Activated CD4-positive, alpha-beta T cell treated with anti-CD3 and anti-CD28 coated beads, Interleukin-2, amount 10 ng/mL, durations not matched to agents 24 days and 14 days (primary cell): ENCODE measurements at regions of chr5 and their contacts with region 1.

Region 1: GRCh38 chr5:80960531-80961375 is 590 bp downstream of the RASGRF2 start:
- DNase-seq: peak; percentile 84
- H3K4me3 Mint-ChIP-seq: peak overlapping the region; percentile 89
- H3K27ac Mint-ChIP-seq: peak overlapping the region; percentile 82
- H3K4me1 Mint-ChIP-seq: peaks cover 48% of the 10 kb centered on the region
- H3K27me3 Mint-ChIP-seq: peaks cover 5% of the 10 kb centered on the region

Region 2: GRCh38 chr5:80346055-80346454 is 614.7 kb before region 1 on chr5:
- intact Hi-C with region 1: no loop called
- DNase-seq: peak; percentile 76
- H3K4me3 Mint-ChIP-seq: no peak overlapping the region
- H3K27ac Mint-ChIP-seq: no peak overlapping the region
- H3K4me1 Mint-ChIP-seq: no peaks in the 10 kb centered on the region
- H3K27me3 Mint-ChIP-seq: peaks cover 4% of the 10 kb centered on the region

Region 3: DNA sequence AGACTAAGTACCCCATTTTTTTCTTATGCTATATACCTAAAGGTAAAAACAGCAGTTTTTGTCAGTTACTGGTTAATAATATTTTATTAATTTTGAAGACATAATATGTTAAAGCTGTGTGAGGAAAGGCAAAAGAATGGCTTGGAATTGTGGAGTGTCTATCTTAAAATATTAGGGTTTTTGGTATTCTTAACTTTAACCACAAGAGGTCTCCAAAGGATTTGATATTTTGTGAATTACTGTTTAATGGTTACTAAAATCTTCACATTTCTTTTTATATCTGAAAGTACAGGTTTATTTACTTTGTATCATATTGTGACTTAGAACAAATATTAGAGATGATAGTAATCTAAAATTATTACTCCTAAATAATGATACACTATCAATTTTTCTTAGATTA is 274.0 kb before region 1 on chr5:
- intact Hi-C with region 1: loop called (anchors 10 kb)
- DNase-seq: no peak
- H3K4me3 Mint-ChIP-seq: no peak overlapping the region
- H3K27ac Mint-ChIP-seq: no peak overlapping the region
- H3K4me1 Mint-ChIP-seq: peaks cover 20% of the 10 kb centered on the region
- H3K27me3 Mint-ChIP-seq: no peaks in the 10 kb centered on the region

Region 4: DNA sequence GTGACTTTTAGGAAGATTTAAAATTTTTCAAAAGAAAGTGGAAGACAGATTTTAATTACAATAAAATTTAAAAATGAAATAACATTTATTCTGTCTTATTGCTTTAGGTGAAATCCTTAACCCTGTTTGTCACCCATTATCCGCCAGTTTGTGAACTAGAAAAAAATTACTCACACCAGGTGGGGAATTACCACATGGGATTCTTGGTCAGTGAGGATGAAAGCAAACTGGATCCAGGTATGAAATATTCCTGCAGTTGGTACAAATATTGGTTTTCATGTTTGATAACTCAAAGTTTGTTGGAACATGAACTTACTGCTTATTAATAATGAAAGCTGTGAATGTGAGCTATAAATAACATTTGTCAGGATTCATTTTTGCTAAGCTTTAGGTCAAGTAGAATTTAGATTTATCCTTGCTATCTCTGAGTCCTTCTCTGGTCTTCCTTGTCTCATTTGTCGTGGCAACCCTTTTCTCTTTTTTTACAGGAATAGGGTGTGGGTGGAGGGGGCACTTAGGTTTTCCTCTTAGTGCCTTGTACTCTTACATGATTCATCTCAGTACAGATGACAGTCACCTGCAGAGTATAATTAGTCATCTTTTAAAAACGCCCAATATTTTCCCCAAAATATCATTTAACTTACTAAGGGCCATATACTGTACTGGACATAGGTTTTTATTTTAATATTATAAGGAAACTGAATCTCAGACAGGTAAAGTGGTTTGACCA is 95.9 kb before region 1 on chr5:
- intact Hi-C with region 1: loop called (anchors 2 kb)
- DNase-seq: no peak
- H3K4me3 Mint-ChIP-seq: peak overlapping the region; percentile 26
- H3K27ac Mint-ChIP-seq: peak overlapping the region; percentile 74
- H3K4me1 Mint-ChIP-seq: peaks cover 53% of the 10 kb centered on the region
- H3K27me3 Mint-ChIP-seq: no peaks in the 10 kb centered on the region

Region 5: DNA sequence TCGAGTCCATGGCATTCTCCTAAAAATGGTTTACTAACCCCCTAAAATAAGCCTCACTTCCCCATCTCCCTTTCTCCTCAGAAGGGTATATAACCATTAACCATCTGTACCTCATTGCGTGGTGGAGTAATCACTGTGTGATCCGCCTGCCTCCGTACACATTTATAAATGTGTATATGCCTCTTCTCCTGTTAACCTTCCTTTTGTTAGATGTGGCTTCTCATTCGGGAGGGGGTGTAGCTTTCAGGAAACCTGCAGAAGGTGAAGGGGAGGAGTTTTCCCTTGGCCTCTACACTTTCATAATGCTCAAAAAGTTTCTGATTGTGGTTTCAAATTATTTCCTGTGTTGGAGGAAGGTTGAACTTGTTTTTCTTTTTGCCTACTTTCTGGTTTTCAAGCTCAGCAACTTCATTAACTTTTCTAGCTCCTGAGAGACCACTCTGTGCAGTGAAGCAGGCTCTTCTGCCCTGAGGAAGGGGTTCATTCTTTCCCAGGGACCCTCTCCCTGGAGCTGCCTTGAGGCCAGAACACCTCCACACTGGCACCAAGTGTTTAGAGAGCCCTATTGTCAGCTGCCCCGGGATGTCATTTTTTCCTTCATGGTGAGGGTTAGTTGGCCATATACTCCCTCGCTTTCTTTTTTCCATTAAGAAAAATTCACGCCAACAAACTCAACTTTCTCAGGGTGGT is 46.3 kb after region 1 on chr5:
- intact Hi-C with region 1: loop called (anchors 1 kb)
- DNase-seq: peak; percentile 89
- H3K4me3 Mint-ChIP-seq: peak overlapping the region; percentile 82
- H3K27ac Mint-ChIP-seq: peak overlapping the region; percentile 94
- H3K4me1 Mint-ChIP-seq: peaks cover 41% of the 10 kb centered on the region
- H3K27me3 Mint-ChIP-seq: no peaks in the 10 kb centered on the region

Region 6: DNA sequence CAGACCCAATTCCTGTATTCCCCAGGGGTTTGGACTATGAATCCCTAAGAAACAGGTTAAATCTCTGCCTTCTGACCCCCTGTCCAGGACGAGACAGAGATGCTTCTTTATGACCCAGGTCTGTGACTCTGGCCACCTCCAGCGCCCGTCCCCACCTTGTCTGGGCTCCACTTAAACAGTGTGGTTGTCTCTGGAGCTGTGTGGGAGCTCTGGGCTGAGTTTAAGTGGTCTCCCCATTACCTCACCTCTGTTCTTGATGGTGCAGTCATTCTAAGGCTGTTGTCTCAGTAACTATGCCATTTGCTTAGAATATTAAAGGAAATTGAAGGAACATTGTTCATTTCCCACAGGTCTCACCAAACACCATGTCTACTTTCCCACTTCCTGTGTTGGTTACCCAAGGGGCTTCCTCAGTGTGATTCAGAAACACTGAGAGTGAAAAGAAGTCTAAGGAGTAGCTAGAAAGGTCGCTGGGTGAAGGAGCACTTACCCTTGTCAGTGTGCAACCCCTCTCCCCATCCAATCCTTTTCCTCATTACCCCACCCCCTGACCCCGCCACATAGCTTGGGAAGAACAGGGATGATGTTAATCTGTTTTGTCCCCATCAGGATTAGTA is 144.6 kb after region 1 on chr5:
- intact Hi-C with region 1: loop called (anchors 2 kb)
- DNase-seq: peak; percentile 59
- H3K4me3 Mint-ChIP-seq: no peak overlapping the region
- H3K27ac Mint-ChIP-seq: no peak overlapping the region
- H3K4me1 Mint-ChIP-seq: peaks cover 25% of the 10 kb centered on the region
- H3K27me3 Mint-ChIP-seq: no peaks in the 10 kb centered on the region

Region 7: GRCh38 chr5:81194633-81195333 is 234.0 kb after region 1 on chr5:
- intact Hi-C with region 1: loop called (anchors 2 kb)
- DNase-seq: peak; percentile 94
- H3K4me3 Mint-ChIP-seq: peak overlapping the region; percentile 24
- H3K27ac Mint-ChIP-seq: no peak overlapping the region
- H3K4me1 Mint-ChIP-seq: peaks cover 4% of the 10 kb centered on the region
- H3K27me3 Mint-ChIP-seq: no peaks in the 10 kb centered on the region